WTC11 (cell line): ENCODE measurements at regions of chr3 and their contacts with region 1.

Region 1: DNA sequence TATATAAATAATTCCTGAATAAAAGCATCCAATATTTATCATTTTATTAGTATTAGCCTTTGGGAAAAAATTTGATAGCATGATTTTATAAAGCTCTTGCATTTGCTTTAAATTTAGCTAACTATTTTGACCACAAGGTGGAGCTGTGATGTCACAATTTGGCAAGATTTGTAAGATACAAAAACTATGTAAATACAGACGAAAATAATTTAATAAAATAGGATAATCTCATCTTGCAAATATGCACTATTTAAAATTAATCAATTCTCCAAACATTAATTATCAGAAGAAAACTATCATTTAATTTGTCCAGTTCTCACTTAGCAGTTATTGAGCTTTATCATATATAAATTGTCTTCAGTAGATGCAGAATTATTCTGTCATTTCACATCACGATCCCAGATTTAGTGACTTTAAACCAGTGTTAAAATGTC is 95.4 kb downstream of the PLOD2 start:
- DNase-seq: no peak
- ATAC-seq: no peak
- H3K4me3 Mint-ChIP-seq: no peak overlapping the region
- H3K27ac Mint-ChIP-seq: no peak overlapping the region
- H3K4me1 Mint-ChIP-seq: no peaks in the 10 kb centered on the region
- H3K27me3 Mint-ChIP-seq: no peaks in the 10 kb centered on the region
- CTCF ChIP-seq: peak; percentile 66

Region 2: GRCh38 chr3:145776782-145777408 is 288.7 kb before region 1 on chr3:
- CTCF ChIA-PET with region 1: interaction called, 10 read pairs
- POLR2A ChIA-PET with region 1: no interaction called
- DNase-seq: peak; percentile 42
- ATAC-seq: peak; percentile 79
- H3K4me3 Mint-ChIP-seq: no peak overlapping the region
- H3K27ac Mint-ChIP-seq: no peak overlapping the region
- H3K4me1 Mint-ChIP-seq: no peaks in the 10 kb centered on the region
- H3K27me3 Mint-ChIP-seq: no peaks in the 10 kb centered on the region
- CTCF ChIP-seq: peak; percentile 72

Region 3: DNA sequence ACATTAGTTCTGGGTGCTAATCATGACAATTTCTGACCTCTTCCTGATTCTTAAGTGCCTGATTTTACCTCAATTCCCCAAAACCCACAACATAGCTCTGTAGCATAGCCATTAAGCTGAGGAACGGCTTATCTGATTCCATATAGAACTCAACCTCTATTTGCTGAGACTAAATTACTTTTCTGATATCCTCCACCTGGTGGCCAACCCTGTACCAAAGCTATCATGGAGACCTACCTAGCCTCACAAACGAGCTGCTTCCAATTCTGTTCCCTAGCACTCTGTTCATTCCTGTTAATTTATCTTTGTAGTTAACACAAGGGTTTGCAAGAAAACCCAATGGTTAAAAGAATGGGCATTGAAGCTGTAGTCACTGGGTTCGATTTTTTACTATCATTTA is 149.8 kb before region 1 on chr3:
- CTCF ChIA-PET with region 1: no interaction called
- POLR2A ChIA-PET with region 1: no interaction called
- DNase-seq: no peak
- ATAC-seq: peak; percentile 65
- H3K4me3 Mint-ChIP-seq: no peak overlapping the region
- H3K27ac Mint-ChIP-seq: no peak overlapping the region
- H3K4me1 Mint-ChIP-seq: no peaks in the 10 kb centered on the region
- H3K27me3 Mint-ChIP-seq: no peaks in the 10 kb centered on the region
- CTCF ChIP-seq: no peak

Region 4: GRCh38 chr3:145991119-145991518 is 74.5 kb before region 1 on chr3:
- CTCF ChIA-PET with region 1: no interaction called
- POLR2A ChIA-PET with region 1: no interaction called
- DNase-seq: no peak
- ATAC-seq: no peak
- H3K4me3 Mint-ChIP-seq: no peak overlapping the region
- H3K27ac Mint-ChIP-seq: no peak overlapping the region
- H3K4me1 Mint-ChIP-seq: no peaks in the 10 kb centered on the region
- H3K27me3 Mint-ChIP-seq: no peaks in the 10 kb centered on the region; the same call in 1 of the 2 replicates
- CTCF ChIP-seq: no peak

Region 5: DNA sequence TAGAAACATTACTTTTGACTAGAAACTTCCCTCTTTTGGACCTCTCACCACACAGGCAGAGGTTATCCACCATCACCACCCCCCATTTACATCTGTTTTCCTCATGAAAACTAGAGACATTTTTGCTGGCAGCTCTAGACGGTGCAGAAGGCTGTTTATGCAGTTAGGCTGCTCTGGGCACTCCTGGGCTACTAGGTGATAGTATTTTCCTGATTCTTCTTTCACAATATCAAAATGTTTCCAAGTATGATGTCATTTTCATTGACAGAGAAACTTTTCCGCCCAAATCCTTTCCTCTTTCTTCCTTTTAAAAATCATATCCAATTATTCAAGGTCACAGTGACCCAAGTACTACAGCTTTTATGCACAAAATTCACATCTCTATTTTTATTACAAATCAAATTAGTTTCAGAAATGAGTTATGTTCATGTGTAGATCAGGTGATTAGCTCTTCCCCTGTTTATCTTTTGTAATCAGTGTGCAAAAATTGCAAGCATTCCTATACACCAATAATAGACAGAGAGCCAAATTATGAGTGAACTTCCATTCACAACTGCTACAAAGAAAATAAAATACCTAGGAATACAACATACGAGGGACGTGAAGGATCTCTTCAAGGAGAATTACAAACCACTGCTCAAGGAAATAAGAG is 28.5 kb after region 1 on chr3:
- CTCF ChIA-PET with region 1: no interaction called
- POLR2A ChIA-PET with region 1: no interaction called
- DNase-seq: no peak
- ATAC-seq: no peak
- H3K4me3 Mint-ChIP-seq: no peak overlapping the region
- H3K27ac Mint-ChIP-seq: peak overlapping the region; percentile 32
- H3K4me1 Mint-ChIP-seq: peaks cover 6% of the 10 kb centered on the region; the same call in 1 of the 2 replicates
- H3K27me3 Mint-ChIP-seq: no peaks in the 10 kb centered on the region
- CTCF ChIP-seq: no peak

Region 6: DNA sequence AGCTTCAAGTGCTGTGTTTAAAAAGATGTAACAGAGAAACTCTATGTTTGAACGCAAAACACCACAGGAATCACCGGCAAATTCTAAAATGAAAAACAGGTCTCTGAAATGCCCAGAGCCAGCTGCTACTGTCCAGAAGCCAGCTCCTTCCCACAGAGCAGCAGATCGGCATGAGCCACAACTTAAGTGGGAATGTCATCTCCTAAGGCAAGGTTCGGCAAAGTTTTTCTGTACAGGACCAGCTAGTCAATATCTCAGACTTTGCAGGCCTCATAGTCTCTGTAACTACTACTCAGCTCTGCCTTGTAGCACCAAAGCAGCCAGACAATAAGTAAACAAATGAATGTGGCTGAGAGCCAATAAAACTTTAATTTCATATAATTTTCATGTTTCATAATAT is 90.5 kb after region 1 on chr3:
- CTCF ChIA-PET with region 1: interaction called, 43 read pairs
- POLR2A ChIA-PET with region 1: interaction called, 5 read pairs
- DNase-seq: no peak
- ATAC-seq: no peak
- H3K4me3 Mint-ChIP-seq: no peak overlapping the region
- H3K27ac Mint-ChIP-seq: peak overlapping the region; percentile 80
- H3K4me1 Mint-ChIP-seq: peaks cover 66% of the 10 kb centered on the region
- H3K27me3 Mint-ChIP-seq: no peaks in the 10 kb centered on the region
- CTCF ChIP-seq: no peak

Region 7: GRCh38 chr3:146160964-146161662 is 95.5 kb after region 1 on chr3 and contains the start of gene PLOD2:
- CTCF ChIA-PET with region 1: interaction called, 43 read pairs
- POLR2A ChIA-PET with region 1: interaction called, 5 read pairs
- DNase-seq: peak; percentile 74
- ATAC-seq: peak; percentile 75
- H3K4me3 Mint-ChIP-seq: peak within 1 kb of the TSS; percentile 83
- H3K27ac Mint-ChIP-seq: peak within 1 kb of the TSS; percentile 97
- H3K4me1 Mint-ChIP-seq: peaks cover 68% of the 10 kb centered on the region
- H3K27me3 Mint-ChIP-seq: peaks cover 16% of the 10 kb centered on the region
- CTCF ChIP-seq: no peak
- total RNA-seq, gene PLOD2: 36.6 to 40.7 TPM (median 39.3 TPM) in 3 replicates